H1 (cell line): ENCODE measurements at regions of chr5 and their contacts with region 1.

Region 1: GRCh38 chr5:60794691-60795090 is 49.4 kb downstream of the ELOVL7 start:
- DNase-seq: no peak
- H3K4me3 ChIP-seq: no peak overlapping the region
- H3K27ac ChIP-seq: no peak overlapping the region
- H3K4me1 ChIP-seq: peaks cover 5 to 11% (median 8%) of the 10 kb centered on the region in 4 experiments
- H3K27me3 ChIP-seq: no peaks in the 10 kb centered on the region
- CTCF ChIP-seq: no peak
- EP300 ChIP-seq: no peak
- POLR2A ChIP-seq: no peak
- RAD21 ChIP-seq: no peak; a peak in 1 of 4 replicates

Region 2: GRCh38 chr5:60779466-60779865 is 15.2 kb before region 1 on chr5:
- CTCF ChIA-PET with region 1: interaction called, 41 read pairs
- POLR2A ChIA-PET with region 1: interaction called, 5 read pairs
- DNase-seq: peak; percentile 59 to 60
- H3K4me3 ChIP-seq: no peak overlapping the region; a peak in 1 of 8 replicates
- H3K27ac ChIP-seq: no peak overlapping the region
- H3K4me1 ChIP-seq: peaks cover 0 to 4% (median 2%) of the 10 kb centered on the region in 4 experiments; a peak in 2 of 7 replicates
- H3K27me3 ChIP-seq: no peaks in the 10 kb centered on the region
- CTCF ChIP-seq: no peak
- EP300 ChIP-seq: no peak
- POLR2A ChIP-seq: no peak
- RAD21 ChIP-seq: no peak